Common myeloid progenitor, CD34-positive (primary cell): ENCODE measurements at regions of chr19 and their contacts with region 1.

Region 1: GRCh38 chr19:14689598-14690503 is at the start of gene ZNF333:
- DNase-seq: peak; percentile 93 to 97 (median 96)
- H3K4me3 ChIP-seq: peak within 1 kb of the TSS; percentile 60 to 97 (median 87)
- H3K27ac ChIP-seq: peak within 1 kb of the TSS; percentile 89 to 95
- H3K4me1 ChIP-seq: peaks cover 5 to 33% (median 24%) of the 10 kb centered on the region in 4 experiments
- H3K27me3 ChIP-seq: no peaks in the 10 kb centered on the region

Region 2: GRCh38 chr19:14571695-14572490 is 118.0 kb before region 1 on chr19 and contains the start of gene NDUFB7:
- CTCF ChIA-PET with region 1: interaction called, 290 read pairs
- POLR2A ChIA-PET with region 1: interaction called, 10 read pairs
- DNase-seq: peak; percentile 89 to 94 (median 89)
- H3K4me3 ChIP-seq: peak within 1 kb of the TSS; percentile 78 to 99 (median 95)
- H3K27ac ChIP-seq: peak within 1 kb of the TSS; percentile 62 to 84
- H3K4me1 ChIP-seq: peaks cover 2 to 23% (median 18%) of the 10 kb centered on the region in 4 experiments
- H3K27me3 ChIP-seq: no peaks in the 10 kb centered on the region

Region 3: GRCh38 chr19:14674764-14675163 is 15.1 kb before region 1 on chr19 and contains the start of gene ADGRE3:
- CTCF ChIA-PET with region 1: interaction called, 32 read pairs
- POLR2A ChIA-PET with region 1: no interaction called
- DNase-seq: peak in 2 of 3 donors; percentile 70 to 75
- H3K4me3 ChIP-seq: peak within 1 kb of the TSS in 2 of 7 experiments; percentile 42 to 57
- H3K27ac ChIP-seq: no peak within 1 kb of the TSS
- H3K4me1 ChIP-seq: peaks cover 0 to 17% (median 11%) of the 10 kb centered on the region in 4 experiments
- H3K27me3 ChIP-seq: no peaks in the 10 kb centered on the region

Region 4: GRCh38 chr19:14871619-14872230 is 181.9 kb after region 1 on chr19:
- CTCF ChIA-PET with region 1: no interaction called
- POLR2A ChIA-PET with region 1: no interaction called
- DNase-seq: peak; percentile 52 to 64 (median 63)
- H3K4me3 ChIP-seq: no peak overlapping the region
- H3K27ac ChIP-seq: no peak overlapping the region
- H3K4me1 ChIP-seq: peaks cover 0 to 4% (median 0%) of the 10 kb centered on the region in 4 experiments
- H3K27me3 ChIP-seq: no peaks in the 10 kb centered on the region